Psoas muscle (tissue), 8 donors: ENCODE measurements at regions of chr11 and their contacts with region 1.

Region 1: GRCh38 chr11:58086528-58086927 is 38.8 kb downstream of the OR9I1 start:
- DNase-seq: no peak
- ATAC-seq: no peak
- H3K4me3 ChIP-seq: no peak overlapping the region
- H3K27ac ChIP-seq: no peak overlapping the region
- H3K4me1 ChIP-seq: no peaks in the 10 kb centered on the region
- H3K27me3 ChIP-seq: no peaks in the 10 kb centered on the region
- CTCF ChIP-seq: no peak

Region 2: GRCh38 chr11:57085611-57086010 is 1000.9 kb before region 1 on chr11:
- intact Hi-C with region 1: no loop called
- DNase-seq: no peak
- ATAC-seq: no peak
- H3K4me3 ChIP-seq: no peak overlapping the region
- H3K27ac ChIP-seq: no peak overlapping the region
- H3K4me1 ChIP-seq: no peaks in the 10 kb centered on the region
- H3K27me3 ChIP-seq: peaks cover 0 to 5% (median 0%) of the 10 kb centered on the region in 3 donors
- CTCF ChIP-seq: no peak

Region 3: GRCh38 chr11:58142761-58143160 is 56.2 kb after region 1 on chr11:
- intact Hi-C with region 1: loop called in 1 of 2 experiments (anchors 10 kb)
- DNase-seq: no peak
- ATAC-seq: no peak
- H3K4me3 ChIP-seq: no peak overlapping the region
- H3K27ac ChIP-seq: no peak overlapping the region
- H3K4me1 ChIP-seq: no peaks in the 10 kb centered on the region
- H3K27me3 ChIP-seq: peaks cover 0 to 2% (median 0%) of the 10 kb centered on the region in 3 donors
- CTCF ChIP-seq: no peak

Region 4: GRCh38 chr11:58268137-58268536 is 181.6 kb after region 1 on chr11 and contains the start of gene OR10W1:
- intact Hi-C with region 1: no loop called
- DNase-seq: no peak
- ATAC-seq: no peak
- H3K4me3 ChIP-seq: no peak within 1 kb of the TSS
- H3K27ac ChIP-seq: no peak within 1 kb of the TSS
- H3K4me1 ChIP-seq: no peaks in the 10 kb centered on the region
- H3K27me3 ChIP-seq: no peaks in the 10 kb centered on the region
- CTCF ChIP-seq: no peak
- total RNA-seq, gene OR10W1: not detected